Activated T-helper 1 cell treated with anti-CD3 and anti-CD28 coated beads, Interleukin-12 subunit alpha, Interleukin-12 subunit beta, Interleukin-2, Interleukin-4 antibody, amounts not matched to agents 30 ng/mL and 10 ng/mL and 1 ng/mL, durations not matched to agents 14 hours and 24 hours and 36 hours (primary cell): ENCODE measurements at regions of chr12 and their contacts with region 1.

Region 1: DNA sequence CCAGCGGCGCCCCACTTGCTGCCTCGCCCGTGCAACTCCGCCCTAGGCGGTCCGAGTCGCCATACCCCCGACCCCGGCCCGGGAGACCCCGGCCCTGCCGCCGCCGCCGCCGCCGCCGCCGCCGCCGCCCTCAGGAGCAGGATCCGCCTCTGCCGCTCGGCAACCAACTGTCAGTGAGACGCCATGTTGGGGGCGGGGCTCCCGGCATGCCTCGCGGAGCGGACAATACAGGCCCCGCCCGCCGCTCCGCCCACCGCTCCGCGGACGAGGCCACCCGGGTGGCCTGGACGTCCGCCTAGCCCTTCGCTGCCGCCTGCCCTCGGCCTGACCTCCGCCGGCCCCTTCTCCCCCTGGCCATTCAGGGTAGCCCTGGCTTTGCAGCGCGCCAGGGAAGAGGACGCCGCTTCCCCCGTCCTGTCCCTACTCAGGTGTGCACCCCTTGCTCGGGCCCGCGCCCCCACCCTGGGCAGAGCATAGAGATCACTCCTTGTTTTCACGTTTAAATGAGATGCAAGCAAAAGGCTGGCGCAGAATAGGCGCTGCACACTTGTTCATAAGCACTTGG is at the start of gene HECTD4:
- DNase-seq: peak; percentile 92
- H3K4me3 Mint-ChIP-seq: peak within 1 kb of the TSS; percentile 95
- H3K27ac Mint-ChIP-seq: peak within 1 kb of the TSS; percentile 91
- H3K4me1 Mint-ChIP-seq: peaks cover 31% of the 10 kb centered on the region
- H3K27me3 Mint-ChIP-seq: peaks cover under 1% of the 10 kb centered on the region
- total RNA-seq, gene HECTD4: 32.3 and 36.9 TPM in 2 replicates

Region 2: GRCh38 chr12:111181143-111181726 is 1201.1 kb before region 1 on chr12:
- intact Hi-C with region 1: no loop called
- DNase-seq: no peak
- H3K4me3 Mint-ChIP-seq: no peak overlapping the region
- H3K27ac Mint-ChIP-seq: no peak overlapping the region
- H3K4me1 Mint-ChIP-seq: no peaks in the 10 kb centered on the region
- H3K27me3 Mint-ChIP-seq: peaks cover 19% of the 10 kb centered on the region

Region 3: DNA sequence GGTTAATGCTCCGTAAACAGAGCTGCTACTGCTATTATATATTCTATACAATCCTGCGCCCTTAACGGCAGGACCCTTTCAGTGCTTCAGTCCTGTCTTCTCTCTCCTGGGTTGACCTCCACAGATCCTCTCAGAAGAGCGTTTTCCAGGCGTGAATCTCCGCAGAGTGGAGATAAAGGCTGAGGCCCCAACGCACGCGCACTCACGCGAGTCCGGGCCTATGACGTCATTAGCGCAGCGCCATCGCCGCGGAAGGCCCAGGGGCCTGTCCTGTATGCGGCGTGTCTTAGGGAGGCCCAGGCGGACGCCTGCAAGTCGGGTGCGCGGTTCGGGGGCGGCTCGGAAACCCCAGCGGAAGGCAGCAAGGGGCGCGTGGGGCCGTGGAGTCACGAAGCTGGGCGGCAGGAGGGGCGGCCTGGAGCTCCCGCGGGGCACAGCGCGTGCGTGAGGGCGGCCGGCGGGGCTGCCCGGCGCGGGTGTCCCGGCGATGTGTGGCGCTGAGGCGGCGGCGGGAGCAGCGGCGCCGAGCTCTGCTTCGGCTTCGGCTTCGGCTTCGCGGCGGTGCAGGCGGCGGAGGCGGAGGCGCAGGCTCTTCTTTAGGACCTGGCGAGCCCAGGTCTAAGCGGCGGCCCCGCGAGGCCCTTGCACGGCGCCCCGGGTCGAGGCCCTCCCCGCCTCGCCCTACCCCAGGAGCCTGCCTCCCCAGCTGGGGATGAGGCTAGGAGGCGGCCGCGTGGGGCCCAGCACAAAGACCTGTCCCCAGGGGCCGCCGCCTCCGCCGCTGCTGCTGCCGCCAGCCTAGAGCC is 540.4 kb before region 1 on chr12 and contains the start of gene MAPKAPK5:
- intact Hi-C with region 1: loop called (anchors 2 kb)
- DNase-seq: peak; percentile 95
- H3K4me3 Mint-ChIP-seq: peak within 1 kb of the TSS; percentile 98
- H3K27ac Mint-ChIP-seq: peak within 1 kb of the TSS; percentile 99
- H3K4me1 Mint-ChIP-seq: peaks cover 49% of the 10 kb centered on the region
- H3K27me3 Mint-ChIP-seq: no peaks in the 10 kb centered on the region
- total RNA-seq, gene MAPKAPK5: 82.1 and 86.5 TPM in 2 replicates

Region 4: GRCh38 chr12:112012775-112013600 is 369.3 kb before region 1 on chr12 and contains the starts of genes ERP29 and TMEM116:
- intact Hi-C with region 1: loop called (anchors 5 kb)
- DNase-seq: peak; percentile 98
- H3K4me3 Mint-ChIP-seq: peak within 1 kb of the TSS; percentile 87
- H3K27ac Mint-ChIP-seq: peak within 1 kb of the TSS; percentile 89
- H3K4me1 Mint-ChIP-seq: peaks cover 51% of the 10 kb centered on the region
- H3K27me3 Mint-ChIP-seq: no peaks in the 10 kb centered on the region
- total RNA-seq, gene ERP29: 60.9 and 62.5 TPM in 2 replicates
- total RNA-seq, gene TMEM116: 10.6 and 11.0 TPM in 2 replicates

Region 5: GRCh38 chr12:112125250-112125999 is 256.9 kb before region 1 on chr12 and contains the start of gene TRAFD1:
- intact Hi-C with region 1: loop called (anchors 1 kb)
- DNase-seq: peak; percentile 98
- H3K4me3 Mint-ChIP-seq: peak within 1 kb of the TSS; percentile 82
- H3K27ac Mint-ChIP-seq: peak within 1 kb of the TSS; percentile 84
- H3K4me1 Mint-ChIP-seq: peaks cover 41% of the 10 kb centered on the region
- H3K27me3 Mint-ChIP-seq: peaks cover 10% of the 10 kb centered on the region
- total RNA-seq, gene TRAFD1: 46.5 and 46.7 TPM in 2 replicates

Region 6: DNA sequence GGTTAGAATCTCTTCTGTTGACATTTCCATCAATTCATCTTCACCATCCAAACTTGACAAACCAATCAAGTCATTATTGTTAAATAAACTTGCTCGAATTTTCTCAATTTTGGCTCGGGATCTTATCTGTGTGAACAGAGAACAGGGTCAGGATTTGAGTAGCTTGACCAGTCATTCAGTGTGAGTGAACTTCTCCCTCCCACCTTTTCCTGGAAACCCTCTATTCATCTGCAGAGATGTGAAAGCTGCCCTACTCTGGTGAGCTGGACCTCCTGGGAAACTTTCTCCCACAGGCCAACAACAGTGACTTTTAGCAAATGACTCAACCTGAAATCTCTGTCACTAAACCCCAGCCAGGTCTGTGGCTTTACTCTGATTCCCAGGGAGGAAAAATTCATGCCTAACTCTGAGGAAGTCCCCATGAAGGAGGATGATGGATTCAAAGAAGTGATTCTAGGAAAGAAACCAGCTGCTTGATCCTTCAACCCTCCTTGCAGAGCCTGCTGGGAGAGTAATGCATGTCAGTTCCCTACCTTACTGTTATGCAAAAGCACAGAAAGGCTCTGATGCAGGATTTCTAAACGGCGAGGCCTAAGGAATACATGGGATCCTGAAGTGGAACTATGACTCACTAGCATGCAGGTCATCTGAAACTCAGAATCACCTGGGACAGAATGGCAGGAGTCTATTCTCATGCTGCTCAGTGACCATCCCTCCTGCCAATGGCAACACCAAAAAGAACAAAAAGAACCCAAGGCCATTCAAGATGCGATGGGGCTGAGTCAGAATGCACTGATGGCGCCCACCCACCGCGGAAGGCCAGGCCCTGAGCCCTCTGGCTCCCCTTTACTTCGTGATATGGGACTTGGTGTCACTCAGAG is 198.9 kb before region 1 on chr12:
- intact Hi-C with region 1: loop called (anchors 1 kb)
- DNase-seq: no peak
- H3K4me3 Mint-ChIP-seq: no peak overlapping the region
- H3K27ac Mint-ChIP-seq: peak overlapping the region; percentile 23
- H3K4me1 Mint-ChIP-seq: peaks cover 13% of the 10 kb centered on the region
- H3K27me3 Mint-ChIP-seq: no peaks in the 10 kb centered on the region

Region 7: GRCh38 chr12:112303004-112303403 is 79.3 kb before region 1 on chr12:
- intact Hi-C with region 1: loop called (anchors 1 kb)
- DNase-seq: peak; percentile 56
- H3K4me3 Mint-ChIP-seq: no peak overlapping the region
- H3K27ac Mint-ChIP-seq: peak overlapping the region; percentile 81
- H3K4me1 Mint-ChIP-seq: peaks cover 11% of the 10 kb centered on the region
- H3K27me3 Mint-ChIP-seq: no peaks in the 10 kb centered on the region

Region 8: DNA sequence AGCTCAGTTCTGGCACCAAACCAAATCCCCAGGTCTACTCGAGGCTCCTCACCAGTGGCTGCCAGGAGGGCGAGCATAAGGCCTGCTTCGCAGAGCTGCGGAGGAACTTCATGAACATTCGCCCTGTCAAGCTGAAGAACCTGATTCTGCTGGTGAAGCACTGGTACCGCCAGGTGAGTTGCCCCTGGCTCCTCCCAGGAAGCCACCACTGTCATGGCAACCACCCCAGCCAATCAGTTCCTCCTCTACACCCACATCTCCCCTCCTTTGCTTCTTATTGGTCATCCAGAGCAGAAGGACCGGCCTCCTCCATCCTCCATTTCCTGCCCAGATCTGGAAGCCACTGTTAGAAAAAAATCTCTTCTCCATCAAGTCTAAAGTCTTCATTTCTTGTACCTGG is 578.8 kb after region 1 on chr12:
- intact Hi-C with region 1: no loop called
- DNase-seq: no peak
- H3K4me3 Mint-ChIP-seq: no peak overlapping the region
- H3K27ac Mint-ChIP-seq: peak overlapping the region; percentile 45
- H3K4me1 Mint-ChIP-seq: peaks cover 49% of the 10 kb centered on the region
- H3K27me3 Mint-ChIP-seq: no peaks in the 10 kb centered on the region